ENCODE measurements at regions of chr4 and their contacts with region 1.

Region 1: GRCh38 chr4:2408401-2408958 is 10.0 kb downstream of the ZFYVE28 start:
- DNase-seq: no peak
- H3K4me3 ChIP-seq: no peak overlapping the region
- H3K27ac ChIP-seq: no peak overlapping the region
- H3K4me1 ChIP-seq: peaks cover 10 to 18% of the 10 kb centered on the region in 2 donors
- H3K27me3 ChIP-seq: no peaks in the 10 kb centered on the region
- CTCF ChIP-seq: no peak
- POLR2A ChIP-seq: no peak

Region 2: DNA sequence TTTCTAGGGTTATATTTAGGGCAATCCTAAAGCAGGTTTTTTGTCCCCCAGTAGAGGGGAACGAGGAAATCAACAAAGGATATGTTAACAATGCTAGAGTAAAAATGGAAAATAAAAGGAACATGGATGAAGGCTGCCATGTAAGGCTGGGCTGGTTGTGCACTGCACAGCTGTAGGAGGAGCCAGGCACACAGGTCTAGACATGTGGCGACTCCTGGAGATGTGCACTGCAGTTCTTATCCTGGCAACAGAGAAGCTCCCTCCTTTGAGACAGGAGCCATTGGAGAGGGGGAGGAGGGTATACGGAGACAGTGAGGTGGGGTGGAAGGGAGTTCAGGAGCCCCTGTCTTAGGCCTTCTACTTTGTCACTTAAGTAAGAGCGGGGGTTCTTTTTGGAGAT is 283.5 kb before region 1 on chr4:
- intact Hi-C with region 1: no loop called
- DNase-seq: no peak
- H3K4me3 ChIP-seq: no peak overlapping the region
- H3K27ac ChIP-seq: no peak overlapping the region
- H3K4me1 ChIP-seq: no peaks in the 10 kb centered on the region
- H3K27me3 ChIP-seq: no peaks in the 10 kb centered on the region
- CTCF ChIP-seq: no peak
- POLR2A ChIP-seq: no peak

Region 3: DNA sequence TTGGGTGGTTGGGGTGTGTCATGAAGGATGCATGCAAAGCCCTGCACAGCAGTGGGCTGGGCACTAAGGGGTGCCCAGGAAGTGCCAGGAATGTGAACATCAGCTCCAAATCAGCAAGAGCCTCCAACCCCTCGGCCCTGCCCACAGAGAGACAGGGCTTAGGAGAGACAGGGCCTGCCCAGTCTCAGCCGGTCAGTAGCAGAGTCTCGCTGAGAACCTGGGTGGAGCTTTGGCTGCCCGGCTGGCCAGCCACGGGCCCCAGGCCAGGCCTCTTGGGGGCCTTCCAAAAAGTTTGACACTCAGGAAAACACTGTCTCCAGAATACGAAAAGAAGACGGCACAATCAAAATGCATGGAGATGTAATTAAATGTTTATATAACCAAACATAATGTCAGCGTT is 142.3 kb before region 1 on chr4:
- intact Hi-C with region 1: loop called in 1 of 2 experiments (anchors 5 kb)
- DNase-seq: peak; percentile 74 to 92 (median 87)
- H3K4me3 ChIP-seq: no peak overlapping the region
- H3K27ac ChIP-seq: peak overlapping the region in 4 of 5 donors; percentile 54 to 76 (median 72)
- H3K4me1 ChIP-seq: peaks cover 20 to 30% of the 10 kb centered on the region in 2 donors
- H3K27me3 ChIP-seq: no peaks in the 10 kb centered on the region
- CTCF ChIP-seq: no peak
- POLR2A ChIP-seq: peak in 1 of 2 donors; percentile 45